MCF 10A (cell line): ENCODE measurements at regions of chr11 and their contacts with region 1.

Region 1: DNA sequence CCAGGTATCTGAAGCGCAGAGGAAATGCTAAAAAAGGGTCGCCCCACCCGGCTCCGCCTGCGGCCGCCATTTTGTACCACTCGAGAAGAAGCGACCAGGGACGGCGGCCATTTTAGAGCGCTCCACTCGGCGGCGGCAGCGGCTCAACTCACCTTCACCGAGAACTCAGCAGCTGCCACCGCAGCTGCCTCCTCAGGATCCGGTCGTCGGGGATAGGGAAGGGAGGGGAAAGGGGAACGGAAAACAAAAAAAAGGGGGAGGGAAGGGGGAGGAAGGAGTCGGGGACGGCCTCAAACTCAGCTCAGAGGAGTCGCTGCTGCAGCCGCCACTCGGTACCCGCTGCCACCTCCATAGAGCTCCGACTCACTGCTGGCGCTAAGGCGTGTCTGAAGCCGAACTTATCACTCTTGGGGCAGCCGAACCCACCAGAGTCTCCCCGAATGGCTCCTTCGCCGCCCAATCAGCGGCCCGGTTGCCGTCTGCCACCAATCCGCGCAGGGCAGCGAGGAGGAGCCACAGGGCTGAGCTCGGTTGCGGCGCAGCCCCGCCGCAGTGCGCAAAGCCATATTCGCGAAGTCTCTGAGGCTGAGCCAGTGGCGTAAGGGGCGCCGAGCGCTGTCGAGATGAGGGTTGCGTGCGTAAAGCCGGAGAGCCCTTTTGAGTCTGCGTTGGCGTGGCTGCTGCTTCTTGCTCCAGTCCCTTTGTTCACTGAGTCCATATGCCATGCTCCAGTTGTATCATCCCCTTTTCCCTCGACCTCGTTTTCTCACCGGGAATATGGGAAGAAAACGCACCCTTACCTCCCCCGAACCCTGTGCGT is at the start of gene EIF4G2:
- DNase-seq: peak; percentile 98
- H3K4me3 Mint-ChIP-seq: peak within 1 kb of the TSS; percentile 89
- H3K27ac Mint-ChIP-seq: peak within 1 kb of the TSS; percentile 97
- H3K4me1 Mint-ChIP-seq: peaks cover 4% of the 10 kb centered on the region
- H3K27me3 Mint-ChIP-seq: no peaks in the 10 kb centered on the region
- CTCF ChIP-seq: no peak
- total RNA-seq, gene EIF4G2: 573 and 817 TPM in 2 replicates

Region 2: GRCh38 chr11:10750838-10751580 is 57.8 kb before region 1 on chr11 and contains the start of gene CTR9:
- CTCF ChIA-PET with region 1: no interaction called
- POLR2A ChIA-PET with region 1: interaction called, 21 read pairs
- intact Hi-C with region 1: no loop called
- DNase-seq: peak; percentile 91
- H3K4me3 Mint-ChIP-seq: peak within 1 kb of the TSS; percentile 95
- H3K27ac Mint-ChIP-seq: peak within 1 kb of the TSS; percentile 97
- H3K4me1 Mint-ChIP-seq: peaks cover 6% of the 10 kb centered on the region
- H3K27me3 Mint-ChIP-seq: no peaks in the 10 kb centered on the region
- CTCF ChIP-seq: no peak
- total RNA-seq, gene CTR9: 25.8 and 28.8 TPM in 2 replicates

Region 3: GRCh38 chr11:10797531-10797930 is 11.2 kb before region 1 on chr11:
- CTCF ChIA-PET with region 1: interaction called, 31 read pairs
- POLR2A ChIA-PET with region 1: interaction called, 60 read pairs
- intact Hi-C with region 1: no loop called
- DNase-seq: no peak
- H3K4me3 Mint-ChIP-seq: no peak overlapping the region
- H3K27ac Mint-ChIP-seq: no peak overlapping the region
- H3K4me1 Mint-ChIP-seq: peaks cover 10% of the 10 kb centered on the region
- H3K27me3 Mint-ChIP-seq: no peaks in the 10 kb centered on the region
- CTCF ChIP-seq: no peak

Region 4: DNA sequence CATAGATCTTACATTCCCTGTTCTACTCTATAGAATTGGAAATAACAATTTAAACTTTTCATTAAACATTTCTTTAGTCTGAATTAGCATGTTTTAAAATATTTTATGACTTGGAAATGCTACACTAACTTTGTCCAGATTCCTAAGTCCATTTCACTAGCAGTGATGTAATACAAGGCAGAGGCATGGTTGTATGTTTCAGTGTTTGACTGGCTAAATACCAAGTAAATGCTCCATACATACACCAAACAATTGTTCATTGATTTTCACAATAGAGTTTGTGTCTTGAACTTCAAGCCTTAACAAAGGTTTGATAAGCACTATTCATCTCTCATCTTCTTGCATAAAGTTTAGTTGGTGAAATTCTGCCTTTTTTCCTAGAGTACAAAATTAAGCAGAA is 35.6 kb after region 1 on chr11:
- CTCF ChIA-PET with region 1: interaction called, 3 read pairs
- POLR2A ChIA-PET with region 1: interaction called, 53 read pairs
- intact Hi-C with region 1: no loop called
- DNase-seq: no peak
- H3K4me3 Mint-ChIP-seq: no peak overlapping the region
- H3K27ac Mint-ChIP-seq: no peak overlapping the region
- H3K4me1 Mint-ChIP-seq: no peaks in the 10 kb centered on the region
- H3K27me3 Mint-ChIP-seq: no peaks in the 10 kb centered on the region
- CTCF ChIP-seq: no peak

Region 5: GRCh38 chr11:10878408-10879214 is 69.8 kb after region 1 on chr11:
- CTCF ChIA-PET with region 1: no interaction called
- POLR2A ChIA-PET with region 1: interaction called, 15 read pairs
- intact Hi-C with region 1: no loop called
- DNase-seq: peak; percentile 73
- H3K4me3 Mint-ChIP-seq: no peak overlapping the region
- H3K27ac Mint-ChIP-seq: no peak overlapping the region
- H3K4me1 Mint-ChIP-seq: peaks cover 26% of the 10 kb centered on the region
- H3K27me3 Mint-ChIP-seq: no peaks in the 10 kb centered on the region
- CTCF ChIP-seq: peak; percentile 57

Region 6: DNA sequence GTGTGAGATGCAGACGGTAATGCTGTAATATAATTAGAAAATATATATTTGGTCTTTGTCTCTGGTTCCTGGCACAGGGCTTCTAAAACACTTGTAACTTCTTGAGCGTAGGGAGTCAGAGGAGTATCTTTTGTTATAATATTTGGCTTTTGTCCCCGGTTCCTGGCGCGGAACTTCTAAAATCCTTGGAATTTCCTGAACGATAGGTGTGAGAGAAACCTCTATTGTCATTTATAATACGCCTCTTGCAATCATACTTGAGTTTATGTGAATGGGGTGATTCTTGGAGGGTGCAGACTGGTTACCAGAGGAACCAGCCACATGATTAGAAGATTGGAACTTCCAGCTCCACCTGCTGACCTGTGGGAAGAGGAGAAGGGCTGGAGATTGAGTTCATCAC is 103.1 kb after region 1 on chr11:
- CTCF ChIA-PET with region 1: interaction called, 3 read pairs
- POLR2A ChIA-PET with region 1: interaction called, 17 read pairs
- intact Hi-C with region 1: no loop called
- DNase-seq: no peak
- H3K4me3 Mint-ChIP-seq: no peak overlapping the region
- H3K27ac Mint-ChIP-seq: no peak overlapping the region
- H3K4me1 Mint-ChIP-seq: peaks cover 26% of the 10 kb centered on the region
- H3K27me3 Mint-ChIP-seq: no peaks in the 10 kb centered on the region
- CTCF ChIP-seq: no peak

Region 7: DNA sequence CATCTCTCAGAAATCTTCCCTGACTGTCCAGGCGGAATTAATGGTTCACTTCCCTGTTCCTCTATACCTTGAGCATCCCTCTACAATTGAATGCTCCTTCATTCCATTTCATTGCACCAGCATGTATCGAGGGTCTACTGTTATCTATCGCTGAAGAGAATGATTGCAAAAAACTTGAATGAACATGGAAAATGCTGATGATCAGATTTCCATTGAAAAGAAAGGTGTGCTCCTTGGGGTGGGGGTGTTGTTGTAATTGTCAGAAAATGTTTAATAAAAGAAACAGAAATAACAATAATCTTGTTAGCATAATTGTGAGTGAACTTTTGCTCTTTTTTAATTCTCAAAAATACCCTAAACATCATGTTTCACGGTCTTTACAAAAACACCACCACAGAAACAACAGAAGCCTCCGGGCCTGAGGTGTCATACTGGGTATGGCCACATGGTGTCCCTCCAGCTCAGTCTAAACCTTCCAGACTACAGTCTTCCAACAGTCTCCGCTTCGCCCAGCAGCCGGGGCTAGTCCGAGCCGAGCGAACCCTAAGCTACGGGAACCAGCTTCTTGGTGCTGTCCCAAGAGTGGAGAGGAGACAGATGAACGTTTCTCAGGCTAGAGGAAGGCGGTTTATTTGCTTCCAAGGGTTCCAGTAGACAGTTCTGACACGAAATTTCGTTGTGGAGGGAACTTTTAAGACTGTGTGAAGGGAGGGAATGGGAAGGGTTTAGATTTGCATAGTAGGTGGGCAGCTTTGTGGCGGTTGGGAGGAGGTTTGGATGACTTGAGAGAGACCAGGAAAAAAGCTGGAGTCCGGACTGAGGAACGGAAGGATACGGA is 124.9 kb after region 1 on chr11:
- CTCF ChIA-PET with region 1: interaction called, 5 read pairs
- POLR2A ChIA-PET with region 1: interaction called, 40 read pairs
- intact Hi-C with region 1: loop called (anchors 2 kb)
- DNase-seq: peak; percentile 93
- H3K4me3 Mint-ChIP-seq: peak overlapping the region; percentile 80
- H3K27ac Mint-ChIP-seq: peak overlapping the region; percentile 29
- H3K4me1 Mint-ChIP-seq: peaks cover 25% of the 10 kb centered on the region
- H3K27me3 Mint-ChIP-seq: no peaks in the 10 kb centered on the region
- CTCF ChIP-seq: peak; percentile 90

Region 8: GRCh38 chr11:11117730-11118129 is 309.0 kb after region 1 on chr11:
- CTCF ChIA-PET with region 1: no interaction called
- POLR2A ChIA-PET with region 1: no interaction called
- intact Hi-C with region 1: no loop called
- DNase-seq: no peak
- H3K4me3 Mint-ChIP-seq: no peak overlapping the region
- H3K27ac Mint-ChIP-seq: no peak overlapping the region
- H3K4me1 Mint-ChIP-seq: no peaks in the 10 kb centered on the region
- H3K27me3 Mint-ChIP-seq: peaks cover 44% of the 10 kb centered on the region
- CTCF ChIP-seq: no peak